ENCODE measurements at regions of chr12 and their contacts with region 1.

Region 1: GRCh38 chr12:6341417-6342139 is at the start of gene TNFRSF1A:
- DNase-seq: no peak
- ATAC-seq: no peak
- H3K4me3 Mint-ChIP-seq: no peak within 1 kb of the TSS
- H3K27ac Mint-ChIP-seq: peak within 1 kb of the TSS; percentile 51
- H3K4me1 Mint-ChIP-seq: peaks cover 15% of the 10 kb centered on the region
- H3K27me3 Mint-ChIP-seq: peaks cover 43% of the 10 kb centered on the region
- CTCF ChIP-seq: no peak
- total RNA-seq, gene TNFRSF1A: 0.37 TPM in 1 of 2 replicates, not detected in the other

Region 2: DNA sequence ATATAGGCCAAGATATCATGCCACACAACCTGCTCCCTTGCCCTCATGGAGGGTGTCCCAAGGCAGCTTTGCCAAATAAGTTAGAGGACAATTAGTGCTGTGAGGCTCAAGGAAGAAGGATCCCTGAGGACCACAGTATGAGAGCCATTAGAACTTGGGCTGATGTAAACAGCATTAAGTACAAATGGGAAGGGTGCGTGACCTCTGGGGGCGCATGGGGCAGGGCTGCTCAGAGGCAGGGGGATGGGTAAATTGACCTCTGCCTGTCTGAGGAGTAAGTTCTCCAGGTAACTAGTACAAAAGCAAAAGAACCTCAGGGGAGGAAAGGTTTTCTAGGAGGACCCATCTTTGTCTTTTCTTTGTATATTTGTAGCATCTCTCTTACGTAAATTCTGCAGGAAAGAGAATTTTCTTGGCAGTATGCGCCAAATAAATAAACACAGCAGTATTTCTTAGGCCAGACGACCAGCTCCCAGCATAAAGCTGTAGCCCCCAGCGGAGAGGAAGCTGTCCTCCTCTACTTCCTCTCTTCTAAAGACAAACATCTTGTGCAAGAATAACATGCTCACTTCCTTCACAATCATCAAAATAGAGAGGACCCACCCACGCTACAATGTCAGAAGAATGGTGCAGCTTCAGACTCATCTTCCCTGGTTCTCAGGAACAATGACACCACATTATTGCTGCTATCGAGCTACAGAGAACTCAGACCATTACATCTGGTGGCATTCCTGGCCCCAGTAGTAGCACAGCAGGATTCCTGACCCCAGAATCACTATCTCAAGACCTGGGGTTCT is 200.7 kb before region 1 on chr12:
- CTCF ChIA-PET with region 1: no interaction called
- POLR2A ChIA-PET with region 1: no interaction called
- intact Hi-C with region 1: no loop called
- DNase-seq: no peak
- ATAC-seq: peak; percentile 37
- H3K4me3 Mint-ChIP-seq: peak overlapping the region; percentile 47
- H3K27ac Mint-ChIP-seq: peak overlapping the region; percentile 68
- H3K4me1 Mint-ChIP-seq: peaks cover 38% of the 10 kb centered on the region
- H3K27me3 Mint-ChIP-seq: peaks cover 5% of the 10 kb centered on the region
- CTCF ChIP-seq: no peak

Region 3: DNA sequence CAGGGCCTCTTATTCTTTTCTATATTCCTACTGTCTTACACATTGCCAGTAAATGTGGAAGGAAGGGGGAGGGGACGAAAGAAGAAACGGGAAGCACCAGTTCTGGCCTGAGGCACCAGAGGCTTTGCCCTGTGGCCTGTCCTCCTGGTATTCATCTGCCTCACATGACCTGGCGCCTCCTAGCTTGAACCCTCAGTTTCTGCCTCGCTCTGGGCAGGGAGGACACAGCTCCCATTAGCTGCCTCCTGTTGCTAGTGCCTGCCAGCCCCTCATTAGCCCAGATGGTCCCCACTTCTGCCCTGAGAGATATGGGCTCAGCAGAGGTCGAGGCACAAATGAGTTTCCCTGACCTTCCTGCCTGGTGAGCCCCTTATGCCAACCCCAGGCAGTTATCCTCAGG is 34.0 kb before region 1 on chr12:
- CTCF ChIA-PET with region 1: no interaction called
- POLR2A ChIA-PET with region 1: no interaction called
- intact Hi-C with region 1: no loop called
- DNase-seq: no peak
- ATAC-seq: no peak
- H3K4me3 Mint-ChIP-seq: no peak overlapping the region
- H3K27ac Mint-ChIP-seq: no peak overlapping the region
- H3K4me1 Mint-ChIP-seq: no peaks in the 10 kb centered on the region
- H3K27me3 Mint-ChIP-seq: peaks cover 54% of the 10 kb centered on the region
- CTCF ChIP-seq: no peak

Region 4: DNA sequence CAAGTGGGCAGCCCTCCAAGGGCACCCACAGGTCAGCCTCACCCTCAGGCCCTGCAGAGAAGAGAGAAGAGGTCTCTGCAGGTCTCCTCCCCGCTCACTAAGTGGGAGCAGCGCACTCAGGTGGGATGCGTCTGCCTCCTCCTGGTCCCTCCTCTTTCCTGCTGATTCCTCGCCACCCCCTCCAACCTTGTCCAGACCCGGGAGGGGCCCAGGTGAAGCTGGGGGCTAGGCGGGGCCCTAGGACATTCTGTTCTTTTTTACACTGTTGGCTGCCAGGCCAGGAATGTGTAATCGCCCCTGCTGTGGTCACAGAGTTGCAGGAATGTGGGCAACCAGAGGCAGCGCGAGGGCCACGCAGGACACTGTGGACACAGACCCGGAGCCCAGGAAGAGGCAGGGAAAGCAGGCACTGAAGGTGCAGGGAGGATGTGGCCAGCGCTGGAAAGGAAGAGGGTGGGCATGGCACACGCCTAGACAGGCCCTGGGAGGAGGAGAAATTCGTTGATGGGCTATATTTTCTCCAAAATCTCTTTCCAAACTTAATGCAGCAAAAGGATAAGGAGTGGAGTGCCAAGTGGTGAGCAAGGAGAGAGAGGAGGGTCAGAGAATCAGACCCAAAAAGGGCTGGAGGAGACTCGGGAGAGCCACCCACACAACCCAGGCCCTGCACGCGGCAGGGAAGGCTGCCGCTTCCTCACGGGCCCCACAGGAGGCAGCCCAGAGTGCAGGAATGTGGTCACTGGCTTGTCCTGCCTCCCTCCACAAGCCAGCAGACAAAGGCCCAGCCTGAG is 34.7 kb after region 1 on chr12:
- CTCF ChIA-PET with region 1: no interaction called
- POLR2A ChIA-PET with region 1: no interaction called
- intact Hi-C with region 1: loop called (anchors 5 kb)
- DNase-seq: no peak
- ATAC-seq: no peak
- H3K4me3 Mint-ChIP-seq: no peak overlapping the region
- H3K27ac Mint-ChIP-seq: no peak overlapping the region
- H3K4me1 Mint-ChIP-seq: no peaks in the 10 kb centered on the region
- H3K27me3 Mint-ChIP-seq: peaks cover 57% of the 10 kb centered on the region
- CTCF ChIP-seq: no peak